Colonic mucosa (tissue), 4 donors: ENCODE measurements at regions of chr16 and their contacts with region 1.

Region 1: GRCh38 chr16:46853713-46854443 is 22.9 kb upstream of the C16orf87 start:
- DNase-seq: peak; percentile 82
- H3K4me3 ChIP-seq: no peak overlapping the region
- H3K27ac ChIP-seq: no peak overlapping the region
- H3K4me1 ChIP-seq: no peaks in the 10 kb centered on the region
- H3K27me3 ChIP-seq: no peaks in the 10 kb centered on the region
- CTCF ChIP-seq: peak; percentile 73

Region 2: DNA sequence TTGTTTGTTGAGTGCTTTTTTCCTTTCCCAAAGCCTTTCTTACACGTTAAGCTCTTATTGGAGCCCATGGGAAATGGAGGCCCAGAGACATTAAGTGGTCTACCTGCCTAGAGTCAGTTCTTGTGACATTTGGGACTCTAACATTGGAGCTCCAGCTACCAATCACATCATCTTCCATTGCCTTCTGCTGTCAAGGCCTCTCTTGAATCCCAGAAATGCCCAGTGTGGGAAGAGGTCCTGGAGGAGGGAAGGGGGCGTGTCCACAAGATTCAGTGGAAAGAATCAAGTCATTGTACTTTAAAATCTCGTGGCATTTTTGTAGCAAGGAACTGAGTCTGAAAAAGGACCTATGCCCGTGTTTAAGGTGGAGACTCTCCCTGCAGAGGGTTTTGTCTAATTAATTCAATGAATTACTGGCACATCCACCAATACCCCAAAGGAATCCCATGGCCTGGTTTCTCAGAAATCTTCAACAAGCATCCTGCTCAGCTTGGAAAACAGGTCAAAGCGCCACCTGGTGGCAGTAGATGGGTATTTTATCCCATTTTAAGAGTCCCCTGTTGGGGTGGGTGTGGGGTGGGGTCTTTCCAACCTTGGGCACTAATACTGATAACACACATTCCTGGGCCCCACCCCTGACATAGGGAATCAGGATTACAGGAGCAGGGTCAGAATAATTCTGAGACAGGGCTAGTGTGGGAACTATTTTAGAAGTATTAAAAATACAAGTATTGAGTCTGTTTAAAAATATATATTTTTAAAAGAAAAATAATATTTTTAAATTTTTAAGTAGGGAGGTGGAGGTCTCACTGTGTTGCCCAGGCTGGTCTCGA is 54.9 kb after region 1 on chr16:
- intact Hi-C with region 1: loop called (anchors 2 kb)
- DNase-seq: peak; percentile 57
- H3K4me3 ChIP-seq: no peak overlapping the region
- H3K27ac ChIP-seq: no peak overlapping the region
- H3K4me1 ChIP-seq: peaks cover 6% of the 10 kb centered on the region
- H3K27me3 ChIP-seq: no peaks in the 10 kb centered on the region
- CTCF ChIP-seq: peak; percentile 78

Region 3: DNA sequence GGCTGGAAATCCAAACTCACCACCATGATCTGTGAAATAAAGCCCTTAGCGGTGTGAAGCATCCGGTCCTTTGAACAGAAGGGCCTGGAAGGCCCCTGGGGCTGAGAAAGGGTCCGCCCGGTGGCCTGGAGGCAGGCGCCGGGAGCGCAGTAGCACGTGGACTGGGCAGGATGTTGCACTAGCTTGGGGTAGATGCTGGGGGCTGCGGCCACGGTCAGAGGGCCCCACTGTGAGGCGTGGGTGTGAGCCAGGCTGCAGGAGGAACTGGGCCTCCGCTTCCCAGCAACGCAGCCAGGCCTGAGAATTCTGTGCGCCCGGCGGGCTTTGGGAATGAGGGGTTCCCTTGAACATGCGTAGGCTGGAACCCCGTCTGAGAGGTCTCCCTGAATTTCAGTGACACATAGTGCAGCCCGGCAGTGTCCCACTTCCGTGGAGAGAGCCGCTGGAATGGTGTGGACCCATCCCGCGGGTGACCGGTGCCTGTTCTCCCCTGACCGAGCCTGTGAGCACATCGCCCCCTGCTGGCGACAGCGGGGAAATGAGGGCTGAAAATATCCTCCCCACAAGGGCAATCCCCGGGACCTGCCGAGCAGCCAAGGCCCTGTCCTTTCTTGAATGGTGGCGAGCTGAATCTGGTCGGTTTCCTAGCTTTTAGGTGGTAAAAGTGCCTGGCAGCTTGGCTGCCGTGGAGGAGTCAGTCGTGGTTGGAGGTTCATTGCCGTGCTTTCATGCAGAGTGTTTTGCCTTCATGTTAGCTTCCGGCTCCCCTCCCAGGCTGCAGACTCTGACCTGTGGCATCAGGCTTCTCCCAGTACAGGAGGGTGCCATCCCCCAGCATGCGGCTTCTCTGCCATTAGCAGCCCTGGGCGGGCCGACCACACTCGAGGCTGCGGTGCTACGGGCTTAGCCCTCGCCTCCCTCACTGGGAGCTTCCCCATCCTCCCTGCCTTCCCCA is 75.8 kb after region 1 on chr16:
- intact Hi-C with region 1: loop called (anchors 5 kb)
- DNase-seq: peak; percentile 75
- H3K4me3 ChIP-seq: no peak overlapping the region
- H3K27ac ChIP-seq: no peak overlapping the region
- H3K4me1 ChIP-seq: no peaks in the 10 kb centered on the region
- H3K27me3 ChIP-seq: no peaks in the 10 kb centered on the region
- CTCF ChIP-seq: peak; percentile 95